ENCODE measurements at regions of chr6 and their contacts with region 1.

Region 1: DNA sequence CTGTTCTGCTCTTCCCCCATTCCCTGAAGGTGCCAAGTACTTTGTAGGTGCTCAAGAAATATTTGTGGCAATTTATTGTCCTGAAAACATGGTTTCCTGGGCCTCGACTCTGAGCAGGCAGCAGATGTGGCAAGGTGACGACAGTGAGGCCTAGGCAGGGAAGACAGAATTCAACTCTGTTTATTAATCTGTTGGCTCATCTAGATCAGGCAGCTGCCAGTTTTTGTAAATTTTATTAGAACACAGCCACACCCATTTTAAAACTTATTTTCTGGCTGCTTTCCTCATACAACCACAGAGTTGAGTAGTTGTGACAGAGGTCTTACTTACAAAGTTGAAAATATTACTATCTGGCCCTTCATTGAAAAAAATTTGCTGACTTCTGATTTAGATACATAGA is 24.5 kb downstream of the MAPK14 start:
- DNase-seq: no peak
- H3K4me3 ChIP-seq: no peak overlapping the region
- H3K27ac ChIP-seq: peak overlapping the region in 1 of 2 experiments; percentile 11
- H3K4me1 ChIP-seq: peaks cover 2 to 20% (median 6%) of the 10 kb centered on the region in 4 experiments
- H3K27me3 ChIP-seq: no peaks in the 10 kb centered on the region

Region 2: GRCh38 chr6:36038120-36038876 is 13.8 kb before region 1 on chr6:
- CTCF ChIA-PET with region 1: interaction called, 10 read pairs
- POLR2A ChIA-PET with region 1: interaction called, 3 read pairs
- DNase-seq: peak in 2 of 3 donors; percentile 67 to 72
- H3K4me3 ChIP-seq: peak overlapping the region in 5 of 7 experiments; percentile 13 to 52 (median 19)
- H3K27ac ChIP-seq: peak overlapping the region; percentile 67 to 84
- H3K4me1 ChIP-seq: peaks cover 34 to 77% (median 50%) of the 10 kb centered on the region in 4 experiments
- H3K27me3 ChIP-seq: no peaks in the 10 kb centered on the region

Region 3: GRCh38 chr6:36083446-36083845 is 31.3 kb after region 1 on chr6:
- CTCF ChIA-PET with region 1: interaction called, 11 read pairs
- POLR2A ChIA-PET with region 1: no interaction called
- DNase-seq: no peak
- H3K4me3 ChIP-seq: no peak overlapping the region
- H3K27ac ChIP-seq: no peak overlapping the region
- H3K4me1 ChIP-seq: peaks cover 0 to 4% (median 0%) of the 10 kb centered on the region in 4 experiments
- H3K27me3 ChIP-seq: no peaks in the 10 kb centered on the region

Measured in common myeloid progenitor, CD34-positive (primary cell).